Mammary epithelial cell (primary cell): ENCODE measurements at regions of chr2 and their contacts with region 1.

Region 1: DNA sequence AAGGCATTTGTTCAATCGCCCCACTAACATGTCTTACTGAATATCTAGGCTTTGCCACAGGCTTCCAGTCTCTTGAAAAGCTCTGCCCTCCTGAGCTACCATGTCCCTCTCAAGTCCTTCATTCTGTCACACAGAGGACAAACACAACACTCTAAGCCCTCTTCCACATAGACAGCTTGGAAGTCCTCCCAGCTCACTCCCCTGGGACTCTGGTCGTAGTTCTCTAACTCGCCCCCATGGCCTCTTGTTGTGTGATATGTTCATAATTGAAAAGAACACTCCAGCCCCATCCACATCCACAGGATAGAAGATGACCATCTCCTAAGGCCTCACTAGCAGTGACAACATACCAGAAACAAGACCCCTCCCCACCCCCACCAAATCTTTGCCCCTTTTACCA is 37.9 kb downstream of the BUB1 start:
- DNase-seq: no peak
- H3K4me3 ChIP-seq: no peak overlapping the region
- H3K27ac ChIP-seq: no peak overlapping the region
- H3K4me1 ChIP-seq: no peaks in the 10 kb centered on the region
- H3K27me3 ChIP-seq: no peaks in the 10 kb centered on the region
- CTCF ChIP-seq: no peak

Region 2: GRCh38 chr2:110735366-110735765 is 95.4 kb after region 1 on chr2:
- CTCF ChIA-PET with region 1: no interaction called
- dilution Hi-C with region 1: loop called (anchors 5 kb)
- in situ Hi-C with region 1: no loop called
- intact Hi-C with region 1: no loop called
- DNase-seq: no peak
- H3K4me3 ChIP-seq: no peak overlapping the region
- H3K27ac ChIP-seq: no peak overlapping the region
- H3K4me1 ChIP-seq: peaks cover 18% of the 10 kb centered on the region
- H3K27me3 ChIP-seq: peaks cover 6% of the 10 kb centered on the region
- CTCF ChIP-seq: no peak

Region 3: GRCh38 chr2:110755491-110756078 is 115.6 kb after region 1 on chr2:
- CTCF ChIA-PET with region 1: interaction called, 13 read pairs
- dilution Hi-C with region 1: no loop called
- in situ Hi-C with region 1: no loop called
- intact Hi-C with region 1: no loop called
- DNase-seq: no peak
- H3K4me3 ChIP-seq: no peak overlapping the region
- H3K27ac ChIP-seq: no peak overlapping the region
- H3K4me1 ChIP-seq: no peaks in the 10 kb centered on the region
- H3K27me3 ChIP-seq: no peaks in the 10 kb centered on the region
- CTCF ChIP-seq: peak; percentile 37 to 43